ENCODE measurements at regions of chr13 and their contacts with region 1.

Region 1: GRCh38 chr13:27953676-27954405 is 15.3 kb downstream of the CDX2 start:
- DNase-seq: peak; percentile 73

Region 2: GRCh38 chr13:27868641-27869435 is 85.0 kb before region 1 on chr13:
- in situ Hi-C with region 1: loop called (anchors 25 kb)
- DNase-seq: peak; percentile 35